AG04450 (cell line): ENCODE measurements at regions of chr21 and their contacts with region 1.

Region 1: DNA sequence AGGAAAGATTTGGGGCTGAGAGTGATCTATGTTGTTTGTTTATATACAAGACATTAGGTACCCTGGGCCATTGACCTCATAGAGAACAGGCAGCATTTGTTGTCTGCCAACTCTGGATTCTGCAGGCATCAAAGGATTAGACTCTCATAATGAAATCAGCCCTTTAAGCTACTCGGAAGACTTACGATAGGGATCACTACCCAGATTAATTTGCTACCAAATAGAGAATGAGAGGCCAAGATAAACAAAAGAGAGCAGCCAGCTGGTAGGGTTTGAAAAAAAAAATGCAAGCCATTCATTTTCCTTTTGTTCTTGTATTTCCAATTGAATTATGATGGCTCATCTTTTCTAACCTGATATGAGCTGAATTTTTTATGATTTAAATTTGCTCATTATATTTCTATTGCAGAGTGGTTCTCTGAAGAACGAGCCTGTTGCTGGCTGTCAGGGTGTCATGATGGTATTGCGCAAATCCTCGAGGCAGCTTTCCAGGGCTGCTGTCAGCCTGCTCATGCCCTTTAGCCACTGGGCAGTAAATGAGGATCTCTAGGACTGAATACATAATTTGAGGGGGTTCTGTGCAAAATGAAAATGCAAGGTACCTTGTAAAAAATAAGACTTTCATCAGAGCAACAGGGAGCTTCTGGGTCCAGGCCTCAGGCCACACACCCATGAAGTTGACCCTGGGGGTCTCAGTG is 116.4 kb upstream of the KCNJ15 start:
- DNase-seq: no peak
- H3K4me3 ChIP-seq: no peak overlapping the region
- H3K27ac ChIP-seq: no peak overlapping the region
- H3K27me3 ChIP-seq: no peaks in the 10 kb centered on the region
- CTCF ChIP-seq: no peak

Region 2: GRCh38 chr21:38126669-38127303 is 13.6 kb before region 1 on chr21:
- CTCF ChIA-PET with region 1: interaction called, 11 read pairs
- POLR2A ChIA-PET with region 1: no interaction called
- DNase-seq: no peak
- H3K4me3 ChIP-seq: no peak overlapping the region
- H3K27ac ChIP-seq: no peak overlapping the region
- H3K27me3 ChIP-seq: peaks cover 16% of the 10 kb centered on the region
- CTCF ChIP-seq: peak; percentile 85